A549 (cell line): ENCODE measurements at regions of chr19 and their contacts with region 1.

Region 1: DNA sequence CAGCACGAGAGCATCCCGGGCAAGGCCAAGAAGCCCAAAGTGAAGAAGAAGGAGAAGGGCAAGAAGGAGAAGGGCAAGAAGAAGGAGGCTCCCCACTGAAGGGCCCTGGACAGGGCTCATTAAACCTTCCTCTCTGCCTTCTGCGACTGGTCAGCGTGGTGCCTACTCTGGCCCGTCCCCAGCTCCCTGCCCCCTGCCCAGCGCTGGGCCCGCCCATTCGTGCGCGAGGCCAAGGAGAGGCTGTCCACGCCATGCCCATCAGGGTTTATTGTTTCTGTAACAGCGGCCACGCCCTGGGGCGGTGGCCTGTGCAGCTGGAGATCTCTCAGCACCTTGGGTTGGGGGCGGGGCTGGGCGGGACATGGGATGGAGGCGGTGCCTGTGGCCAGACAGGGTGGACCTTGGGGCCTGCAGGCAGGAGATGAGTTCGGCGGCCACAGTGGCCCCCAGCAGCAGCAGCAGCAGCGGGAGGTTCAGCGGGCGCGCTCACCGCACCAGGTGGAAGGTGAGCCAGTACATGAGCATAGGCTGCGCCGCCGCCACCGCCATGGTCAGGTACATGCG is 897 bp downstream of the C19orf33 start:
- DNase-seq: peak; percentile 100
- ATAC-seq: peak; percentile 60 to 85
- H3K4me3 ChIP-seq: peak overlapping the region; percentile 60
- H3K27ac ChIP-seq: peak overlapping the region; percentile 92 to 95
- H3K4me1 ChIP-seq: peaks cover 50% of the 10 kb centered on the region
- CTCF ChIP-seq: no peak
- EP300 ChIP-seq: no peak; a peak in 1 of 5 replicates
- POLR2A ChIP-seq: peak; percentile 82
- RAD21 ChIP-seq: peak; percentile 1 to 43; a peak in 2 of 5 replicates

Region 2: GRCh38 chr19:38250821-38251563 is 54.0 kb before region 1 on chr19:
- CTCF ChIA-PET with region 1: interaction called, 15 read pairs
- POLR2A ChIA-PET with region 1: interaction called, 22 read pairs
- DNase-seq: no peak
- ATAC-seq: no peak
- H3K4me3 ChIP-seq: no peak overlapping the region
- H3K27ac ChIP-seq: peak overlapping the region in 1 of 2 experiments; percentile 39; a peak in 3 of 6 replicates
- H3K4me1 ChIP-seq: peaks cover 34% of the 10 kb centered on the region
- CTCF ChIP-seq: no peak
- EP300 ChIP-seq: no peak
- POLR2A ChIP-seq: no peak
- RAD21 ChIP-seq: no peak

Region 3: DNA sequence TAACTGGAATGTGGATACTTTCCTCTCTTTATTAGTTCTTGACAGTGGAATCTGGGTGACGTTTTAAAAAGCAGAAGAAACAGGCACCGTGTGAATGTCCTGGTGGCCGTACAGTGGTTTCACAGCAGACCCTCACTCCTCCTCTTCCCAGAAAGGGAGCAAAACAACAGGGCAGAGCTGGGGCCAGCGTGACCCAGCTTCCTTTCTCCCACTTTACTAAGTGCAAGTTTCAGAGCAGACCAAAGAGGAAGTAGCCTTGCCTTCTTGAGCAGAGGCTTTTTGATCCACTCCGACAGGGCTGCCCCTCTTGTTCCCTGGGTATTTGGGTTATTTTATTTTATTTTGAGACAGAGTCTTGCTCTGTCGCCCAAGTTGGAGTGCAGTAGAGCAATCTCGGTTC is 20.5 kb before region 1 on chr19:
- CTCF ChIA-PET with region 1: interaction called, 5 read pairs
- POLR2A ChIA-PET with region 1: interaction called, 13 read pairs
- DNase-seq: no peak
- ATAC-seq: no peak
- H3K4me3 ChIP-seq: no peak overlapping the region
- H3K27ac ChIP-seq: no peak overlapping the region
- H3K4me1 ChIP-seq: peaks cover 7% of the 10 kb centered on the region; the same call in 1 of the 3 replicates
- CTCF ChIP-seq: no peak
- EP300 ChIP-seq: no peak
- POLR2A ChIP-seq: no peak
- RAD21 ChIP-seq: no peak

Region 4: DNA sequence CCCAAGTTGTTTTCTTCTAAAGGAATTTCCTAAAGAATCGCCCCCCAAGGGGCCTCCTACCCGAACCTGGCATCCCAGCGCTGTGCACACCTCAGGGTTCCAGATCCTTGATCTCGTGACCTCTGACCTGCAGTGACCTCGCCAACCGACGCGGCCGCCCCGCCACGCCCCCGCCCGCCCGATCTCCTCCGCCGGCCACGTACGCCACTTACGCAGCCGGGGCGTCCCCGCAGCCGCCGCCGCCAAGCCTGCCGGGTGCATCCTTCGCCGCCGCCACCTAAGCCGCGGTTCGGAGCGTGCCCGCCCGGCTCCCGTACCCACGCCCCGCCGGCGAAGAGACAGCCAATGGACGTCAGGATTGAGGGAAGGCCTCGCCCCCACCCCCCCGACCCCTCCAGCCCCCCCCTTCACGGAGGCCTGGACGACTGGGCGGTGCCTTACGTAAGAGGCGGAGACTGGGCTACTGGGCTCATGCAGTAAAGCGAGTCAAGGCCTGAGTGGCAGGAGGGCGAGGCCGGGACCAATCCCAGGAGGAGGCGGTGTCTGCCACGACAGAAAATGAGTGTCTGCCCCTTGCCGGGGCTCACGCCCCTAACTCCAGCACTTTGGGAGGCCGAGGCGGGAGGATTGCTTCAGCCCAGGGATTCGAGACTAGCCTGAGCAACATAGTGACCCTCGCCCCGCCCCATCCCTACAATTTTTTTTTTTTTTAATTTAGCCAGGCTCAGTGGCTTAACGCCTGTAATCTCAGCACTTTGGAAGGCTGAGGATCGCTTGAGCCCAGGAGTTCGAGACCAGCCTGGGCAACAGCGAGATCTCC is 10.9 kb after region 1 on chr19 and contains the start of gene YIF1B:
- CTCF ChIA-PET with region 1: interaction called, 41 read pairs
- POLR2A ChIA-PET with region 1: interaction called, 4 read pairs
- DNase-seq: peak; percentile 100
- ATAC-seq: peak; percentile 87 to 93
- H3K4me3 ChIP-seq: peak within 1 kb of the TSS; percentile 62
- H3K27ac ChIP-seq: peak within 1 kb of the TSS; percentile 76 to 85
- H3K4me1 ChIP-seq: peaks cover 10% of the 10 kb centered on the region; the same call in 2 of the 3 replicates
- CTCF ChIP-seq: no peak
- EP300 ChIP-seq: no peak
- POLR2A ChIP-seq: peak; percentile 63
- RAD21 ChIP-seq: no peak; a peak in 2 of 5 replicates
- polyA plus RNA-seq, gene YIF1B: 75.5 and 88.1 TPM in 2 replicates

Region 5: GRCh38 chr19:38387550-38388348 is 82.8 kb after region 1 on chr19 and contains the start of gene GGN:
- CTCF ChIA-PET with region 1: interaction called, 12 read pairs
- POLR2A ChIA-PET with region 1: interaction called, 10 read pairs
- DNase-seq: peak; percentile 98 to 100
- ATAC-seq: peak; percentile 53 to 78
- H3K4me3 ChIP-seq: peak within 1 kb of the TSS; percentile 61
- H3K27ac ChIP-seq: peak within 1 kb of the TSS; percentile 71 to 90
- H3K4me1 ChIP-seq: peaks cover 35% of the 10 kb centered on the region
- CTCF ChIP-seq: no peak
- EP300 ChIP-seq: no peak
- POLR2A ChIP-seq: no peak; the same call in 1 of the 2 replicates
- RAD21 ChIP-seq: no peak
- polyA plus RNA-seq, gene GGN: not detected in 2 replicates